Naive thymus-derived CD4-positive, alpha-beta T cell (primary cell): ENCODE measurements at regions of chr5 and their contacts with region 1.

Region 1: DNA sequence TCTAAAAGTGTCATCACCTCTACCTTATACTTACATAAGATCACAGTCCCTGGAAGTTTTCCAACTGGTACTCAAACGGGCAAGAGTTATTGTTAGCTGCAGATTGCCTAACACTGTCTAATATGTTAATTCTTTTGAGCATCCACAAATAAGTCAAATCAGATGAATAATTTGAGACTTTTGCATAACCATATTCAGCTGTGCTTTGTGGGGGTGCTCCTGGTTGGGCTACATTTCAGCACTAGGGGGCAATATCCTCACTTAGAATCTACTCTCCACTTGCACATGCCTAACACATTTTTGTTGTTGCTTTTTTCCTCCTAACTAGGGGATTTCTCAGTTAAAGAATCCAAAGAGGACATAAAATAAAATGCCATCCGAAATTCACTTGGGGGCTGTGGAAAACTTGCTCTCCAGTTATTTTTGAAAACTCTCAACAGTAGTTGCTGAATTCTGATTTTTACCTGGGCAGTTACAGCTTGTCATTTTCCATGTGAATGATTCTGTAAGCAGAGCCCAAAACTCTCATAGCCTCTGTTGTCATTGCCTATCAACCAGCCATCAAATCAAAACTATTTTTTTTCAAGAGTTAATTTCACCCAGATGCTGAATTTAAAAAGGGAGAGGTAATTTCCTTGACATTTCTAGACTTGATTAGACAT is 71.5 kb downstream of the TRIM36 start:
- DNase-seq: peak in 5 of 9 donors; percentile 14 to 32 (median 19)
- ATAC-seq: peak; percentile 74
- H3K4me3 ChIP-seq: no peak overlapping the region
- H3K4me3 Mint-ChIP-seq: no peak overlapping the region
- H3K27ac ChIP-seq: no peak overlapping the region
- H3K27ac Mint-ChIP-seq: no peak overlapping the region
- H3K4me1 ChIP-seq: no peaks in the 10 kb centered on the region
- H3K4me1 Mint-ChIP-seq: no peaks in the 10 kb centered on the region
- H3K27me3 ChIP-seq: peaks cover 0 to 4% of the 10 kb centered on the region in 2 donors
- H3K27me3 Mint-ChIP-seq: peaks cover 0 to 20% (median 13%) of the 10 kb centered on the region in 5 donors

Region 2: GRCh38 chr5:114727358-114727757 is 370.8 kb before region 1 on chr5:
- CTCF ChIA-PET with region 1: no interaction called
- POLR2A ChIA-PET with region 1: no interaction called
- intact Hi-C with region 1: no loop called
- DNase-seq: no peak
- ATAC-seq: no peak
- H3K4me3 ChIP-seq: no peak overlapping the region
- H3K4me3 Mint-ChIP-seq: no peak overlapping the region
- H3K27ac ChIP-seq: no peak overlapping the region
- H3K27ac Mint-ChIP-seq: no peak overlapping the region
- H3K4me1 ChIP-seq: no peaks in the 10 kb centered on the region
- H3K4me1 Mint-ChIP-seq: no peaks in the 10 kb centered on the region
- H3K27me3 ChIP-seq: no peaks in the 10 kb centered on the region
- H3K27me3 Mint-ChIP-seq: peaks cover 0 to 5% (median 0%) of the 10 kb centered on the region in 5 donors

Region 3: DNA sequence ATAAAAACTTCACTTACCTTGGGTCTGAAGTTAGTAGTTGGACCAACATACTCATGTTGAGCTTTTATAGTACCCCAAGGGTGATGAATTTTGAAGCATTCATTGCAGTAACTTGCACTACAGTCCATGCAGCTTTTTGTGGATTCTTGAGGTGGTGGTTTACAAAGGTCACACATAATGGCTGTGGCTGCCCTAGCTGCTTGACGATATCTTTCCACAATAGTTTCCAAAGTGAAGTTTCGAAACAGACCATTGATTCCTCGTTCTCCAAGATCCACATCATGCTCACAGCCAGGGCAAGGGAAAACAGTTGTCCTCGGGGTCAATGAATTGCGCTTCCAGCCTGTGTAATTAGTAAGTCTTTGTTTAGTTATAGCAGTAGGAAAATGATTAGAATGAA is 48.9 kb after region 1 on chr5:
- CTCF ChIA-PET with region 1: no interaction called
- POLR2A ChIA-PET with region 1: no interaction called
- intact Hi-C with region 1: no loop called
- DNase-seq: no peak
- ATAC-seq: no peak
- H3K4me3 ChIP-seq: no peak overlapping the region
- H3K4me3 Mint-ChIP-seq: no peak overlapping the region
- H3K27ac ChIP-seq: no peak overlapping the region
- H3K27ac Mint-ChIP-seq: no peak overlapping the region
- H3K4me1 ChIP-seq: no peaks in the 10 kb centered on the region
- H3K4me1 Mint-ChIP-seq: no peaks in the 10 kb centered on the region
- H3K27me3 ChIP-seq: no peaks in the 10 kb centered on the region
- H3K27me3 Mint-ChIP-seq: peaks cover 11 to 34% (median 26%) of the 10 kb centered on the region in 5 donors

Region 4: GRCh38 chr5:115246361-115246991 is 148.3 kb after region 1 on chr5:
- CTCF ChIA-PET with region 1: interaction called, 4 read pairs
- POLR2A ChIA-PET with region 1: no interaction called
- intact Hi-C with region 1: loop called in 1 of 2 experiments (anchors 1 kb)
- DNase-seq: peak in 6 of 9 donors; percentile 8 to 36 (median 18)
- ATAC-seq: peak; percentile 77
- H3K4me3 ChIP-seq: no peak overlapping the region
- H3K4me3 Mint-ChIP-seq: no peak overlapping the region
- H3K27ac ChIP-seq: no peak overlapping the region
- H3K27ac Mint-ChIP-seq: peak overlapping the region in 1 of 9 donors; percentile 1
- H3K4me1 ChIP-seq: no peaks in the 10 kb centered on the region
- H3K4me1 Mint-ChIP-seq: peaks cover 7 to 38% (median 20%) of the 10 kb centered on the region in 7 donors
- H3K27me3 ChIP-seq: no peaks in the 10 kb centered on the region
- H3K27me3 Mint-ChIP-seq: no peaks in the 10 kb centered on the region

Region 5: DNA sequence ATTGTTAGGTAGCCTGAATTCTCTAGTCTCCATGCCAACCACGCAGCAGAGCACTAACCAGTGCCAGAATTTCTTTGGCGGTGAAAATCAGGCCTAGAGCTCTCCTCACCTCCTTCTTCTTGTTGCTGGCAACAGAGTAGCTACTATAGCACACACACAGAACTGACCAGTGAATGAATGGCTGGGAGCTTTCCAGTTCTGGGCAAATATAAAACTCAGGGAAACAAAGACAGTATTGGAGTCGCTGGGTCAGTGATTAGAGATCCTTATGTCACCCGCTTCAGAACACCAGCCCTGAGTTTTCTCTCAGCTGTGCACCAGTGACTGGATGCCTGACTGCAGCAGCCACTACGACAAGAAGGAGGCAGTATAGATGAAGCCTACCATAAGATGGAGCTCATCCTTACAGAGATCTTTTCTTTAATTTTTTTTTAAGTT is 473.3 kb after region 1 on chr5:
- CTCF ChIA-PET with region 1: no interaction called
- POLR2A ChIA-PET with region 1: no interaction called
- intact Hi-C with region 1: loop called (anchors 5 kb)
- DNase-seq: no peak
- ATAC-seq: no peak
- H3K4me3 ChIP-seq: no peak overlapping the region
- H3K4me3 Mint-ChIP-seq: no peak overlapping the region
- H3K27ac ChIP-seq: no peak overlapping the region
- H3K27ac Mint-ChIP-seq: no peak overlapping the region
- H3K4me1 ChIP-seq: no peaks in the 10 kb centered on the region
- H3K4me1 Mint-ChIP-seq: peaks cover 0 to 2% (median 0%) of the 10 kb centered on the region in 7 donors
- H3K27me3 ChIP-seq: no peaks in the 10 kb centered on the region
- H3K27me3 Mint-ChIP-seq: peaks cover 0 to 26% (median under 1%) of the 10 kb centered on the region in 5 donors

Region 6: GRCh38 chr5:115586601-115587048 is 488.5 kb after region 1 on chr5:
- CTCF ChIA-PET with region 1: no interaction called
- POLR2A ChIA-PET with region 1: no interaction called
- intact Hi-C with region 1: loop called (anchors 2 to 5 kb)
- DNase-seq: peak in 6 of 9 donors; percentile 13 to 38 (median 27)
- ATAC-seq: peak; percentile 56
- H3K4me3 ChIP-seq: no peak overlapping the region
- H3K4me3 Mint-ChIP-seq: no peak overlapping the region
- H3K27ac ChIP-seq: no peak overlapping the region
- H3K27ac Mint-ChIP-seq: no peak overlapping the region
- H3K4me1 ChIP-seq: no peaks in the 10 kb centered on the region
- H3K4me1 Mint-ChIP-seq: no peaks in the 10 kb centered on the region
- H3K27me3 ChIP-seq: no peaks in the 10 kb centered on the region
- H3K27me3 Mint-ChIP-seq: peaks cover 0 to 5% (median 0%) of the 10 kb centered on the region in 5 donors